ENCODE measurements at regions of chr20 and their contacts with region 1.

Region 1: DNA sequence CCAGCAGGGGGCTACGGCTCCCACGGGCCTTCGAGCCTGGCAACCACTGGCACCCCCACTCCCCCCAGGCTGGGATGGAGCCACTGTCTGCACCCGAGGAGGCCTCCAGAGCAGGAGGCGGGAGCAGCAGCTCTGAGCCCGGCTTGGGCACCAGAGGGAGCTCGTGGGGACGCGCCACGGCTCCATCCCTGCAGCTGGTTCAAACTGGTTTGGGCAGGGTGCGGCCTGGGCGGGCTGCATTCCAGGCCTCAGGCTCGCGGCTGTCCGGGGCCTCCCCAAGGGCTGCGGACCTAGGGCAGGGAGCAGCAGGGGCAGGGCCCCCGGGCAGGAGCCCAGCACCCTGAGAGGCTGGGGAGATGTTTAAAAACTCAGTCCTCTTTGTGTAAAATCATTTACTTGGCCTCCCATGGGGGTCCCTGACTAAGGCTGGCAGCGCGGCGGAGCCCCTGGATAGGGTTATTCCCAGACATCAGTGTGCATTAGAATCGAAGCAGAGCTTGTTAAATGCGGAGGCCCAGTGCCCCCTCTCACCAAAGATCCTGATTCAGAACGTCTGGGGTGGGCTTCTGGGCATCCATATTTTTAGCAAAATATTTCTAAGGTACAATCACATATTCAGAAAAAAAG is 4.1 kb upstream of the BCAS4 start:
- DNase-seq: peak; percentile 27 to 89
- H3K4me3 ChIP-seq: peak overlapping the region in 1 of 2 donors; percentile 51
- H3K27ac ChIP-seq: peak overlapping the region; percentile 65 to 74
- H3K4me1 ChIP-seq: peaks cover 7 to 21% of the 10 kb centered on the region in 2 donors
- H3K27me3 ChIP-seq: no peaks in the 10 kb centered on the region
- CTCF ChIP-seq: peak; percentile 71 to 88 (median 86)

Region 2: GRCh38 chr20:50776122-50776817 is 14.5 kb before region 1 on chr20:
- intact Hi-C with region 1: no loop called
- DNase-seq: no peak
- H3K4me3 ChIP-seq: no peak overlapping the region
- H3K27ac ChIP-seq: no peak overlapping the region
- H3K4me1 ChIP-seq: no peaks in the 10 kb centered on the region
- H3K27me3 ChIP-seq: no peaks in the 10 kb centered on the region
- CTCF ChIP-seq: no peak

Region 3: DNA sequence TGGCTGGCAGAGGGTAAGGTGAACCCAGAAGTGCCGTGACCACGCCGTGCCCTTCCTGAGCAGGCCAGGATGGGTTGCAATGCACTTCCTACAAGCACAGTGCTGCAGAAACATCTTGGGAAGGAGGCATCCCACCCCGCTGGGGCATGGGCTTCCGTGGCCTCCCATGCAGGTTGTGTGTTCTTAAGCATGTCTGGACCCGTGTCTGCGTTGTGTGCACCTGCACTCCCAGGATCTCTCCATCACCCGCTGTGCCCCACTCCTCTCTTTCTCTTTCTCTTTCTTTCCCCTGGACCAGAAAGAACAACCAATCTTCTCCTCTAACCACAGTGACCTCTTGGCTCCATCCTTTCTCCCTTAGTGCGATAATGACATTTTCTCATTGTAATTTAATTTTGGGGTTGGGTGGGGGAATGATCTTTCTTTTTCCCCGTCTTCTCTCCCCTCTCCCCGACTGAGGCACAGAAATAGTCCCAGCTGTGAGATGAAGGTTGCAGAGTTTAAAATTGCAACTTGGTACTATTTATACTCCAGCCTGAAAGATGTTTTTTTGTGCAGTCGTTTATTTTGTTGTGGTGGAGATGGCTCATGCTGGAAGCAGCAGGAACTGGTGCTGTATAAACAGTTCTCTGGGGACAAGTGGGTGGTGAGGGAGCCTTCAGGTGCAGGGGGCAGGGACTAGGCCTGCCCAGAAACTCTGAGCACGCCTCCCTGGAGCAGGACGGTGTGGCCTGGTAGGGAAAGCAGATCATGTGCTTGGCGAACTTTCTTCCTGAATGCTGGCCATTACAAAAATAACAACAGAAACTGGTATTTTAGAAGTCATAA is 24.6 kb after region 1 on chr20:
- intact Hi-C with region 1: loop called (anchors 2 kb)
- DNase-seq: no peak
- H3K4me3 ChIP-seq: no peak overlapping the region
- H3K27ac ChIP-seq: peak overlapping the region; percentile 52 to 60
- H3K4me1 ChIP-seq: peaks cover 4 to 31% of the 10 kb centered on the region in 2 donors
- H3K27me3 ChIP-seq: no peaks in the 10 kb centered on the region
- CTCF ChIP-seq: no peak

Region 4: GRCh38 chr20:50837532-50838506 is 47.1 kb after region 1 on chr20:
- intact Hi-C with region 1: loop called (anchors 1 kb)
- DNase-seq: peak; percentile 35 to 83
- H3K4me3 ChIP-seq: peak overlapping the region in 1 of 2 donors; percentile 39
- H3K27ac ChIP-seq: peak overlapping the region; percentile 83 to 89
- H3K4me1 ChIP-seq: peaks cover 3 to 15% of the 10 kb centered on the region in 2 donors
- H3K27me3 ChIP-seq: no peaks in the 10 kb centered on the region
- CTCF ChIP-seq: no peak

Region 5: GRCh38 chr20:50904067-50904570 is 113.4 kb after region 1 on chr20:
- intact Hi-C with region 1: no loop called
- DNase-seq: no peak
- H3K4me3 ChIP-seq: peak overlapping the region in 1 of 2 donors; percentile 0
- H3K27ac ChIP-seq: no peak overlapping the region
- H3K4me1 ChIP-seq: peaks cover 0 to 20% of the 10 kb centered on the region in 2 donors
- H3K27me3 ChIP-seq: no peaks in the 10 kb centered on the region
- CTCF ChIP-seq: no peak

Region 6: GRCh38 chr20:50929299-50930138 is 138.8 kb after region 1 on chr20:
- intact Hi-C with region 1: loop called (anchors 1 kb)
- DNase-seq: peak; percentile 65 to 96
- H3K4me3 ChIP-seq: peak overlapping the region; percentile 89 to 98
- H3K27ac ChIP-seq: peak overlapping the region; percentile 72 to 75
- H3K4me1 ChIP-seq: peaks cover 0 to 18% of the 10 kb centered on the region in 2 donors
- H3K27me3 ChIP-seq: no peaks in the 10 kb centered on the region
- CTCF ChIP-seq: peak; percentile 92 to 95 (median 93)

Region 7: DNA sequence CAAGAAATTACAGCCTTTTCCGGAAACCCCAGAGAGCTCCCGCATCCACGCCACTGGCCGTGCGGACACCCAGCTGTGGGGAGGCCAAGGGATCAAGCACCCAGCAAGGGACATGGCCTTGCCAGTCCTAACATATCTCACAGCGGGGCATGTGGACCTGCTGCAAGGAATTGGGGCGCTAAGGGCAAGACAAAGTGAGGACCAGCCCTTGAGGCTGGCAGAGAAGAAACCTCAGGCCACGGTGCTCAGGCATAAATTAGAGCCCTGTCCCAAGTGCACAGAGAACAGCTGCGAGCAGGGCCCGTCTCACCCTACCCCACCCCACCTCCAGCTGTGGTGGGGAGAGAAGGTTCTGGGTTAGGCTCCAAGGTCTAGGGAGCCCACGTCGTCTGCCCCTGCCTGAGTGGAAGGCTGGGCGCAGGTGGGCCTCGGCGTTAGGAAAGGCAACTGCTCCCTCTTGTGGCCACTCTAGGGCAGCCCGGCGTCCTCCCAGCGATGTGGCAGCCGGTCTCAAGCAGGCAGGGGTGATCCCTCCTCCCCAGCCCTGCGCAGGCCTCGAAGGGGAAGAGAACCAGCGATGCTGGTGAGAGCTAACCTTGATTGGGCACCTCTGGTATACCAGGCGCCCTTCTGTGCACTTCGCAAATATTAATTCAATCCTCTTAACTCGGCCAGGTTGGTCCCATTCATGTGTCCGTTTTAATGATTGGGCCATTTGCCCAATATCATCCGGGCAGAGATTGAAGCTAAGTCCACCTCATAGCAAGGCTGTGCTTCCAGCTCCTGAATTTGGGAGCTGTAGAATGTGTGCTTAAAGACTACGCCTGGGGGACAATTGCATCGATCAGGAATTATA is 516.0 kb after region 1 on chr20:
- intact Hi-C with region 1: loop called (anchors 5 kb)
- DNase-seq: peak in 1 of 2 donors; percentile 79
- H3K4me3 ChIP-seq: no peak overlapping the region
- H3K27ac ChIP-seq: no peak overlapping the region
- H3K4me1 ChIP-seq: no peaks in the 10 kb centered on the region
- H3K27me3 ChIP-seq: no peaks in the 10 kb centered on the region
- CTCF ChIP-seq: peak; percentile 64 to 91 (median 82)

Measured in ascending aorta (tissue), 2 donors.